ENCODE measurements at regions of chr10 and their contacts with region 1.

Region 1: GRCh38 chr10:45454859-45455258 is 80.8 kb downstream of the ALOX5 start:
- DNase-seq: no peak
- H3K4me3 ChIP-seq: no peak overlapping the region
- H3K27ac ChIP-seq: no peak overlapping the region
- H3K4me1 ChIP-seq: no peaks in the 10 kb centered on the region
- H3K27me3 ChIP-seq: no peaks in the 10 kb centered on the region
- CTCF ChIP-seq: no peak
- EP300 ChIP-seq: no peak
- POLR2A ChIP-seq: no peak

Region 2: GRCh38 chr10:45433716-45434469 is 21.0 kb before region 1 on chr10:
- intact Hi-C with region 1: no loop called
- DNase-seq: no peak
- H3K4me3 ChIP-seq: no peak overlapping the region
- H3K27ac ChIP-seq: no peak overlapping the region
- H3K4me1 ChIP-seq: no peaks in the 10 kb centered on the region
- H3K27me3 ChIP-seq: no peaks in the 10 kb centered on the region
- CTCF ChIP-seq: no peak
- EP300 ChIP-seq: no peak
- POLR2A ChIP-seq: no peak

Region 3: DNA sequence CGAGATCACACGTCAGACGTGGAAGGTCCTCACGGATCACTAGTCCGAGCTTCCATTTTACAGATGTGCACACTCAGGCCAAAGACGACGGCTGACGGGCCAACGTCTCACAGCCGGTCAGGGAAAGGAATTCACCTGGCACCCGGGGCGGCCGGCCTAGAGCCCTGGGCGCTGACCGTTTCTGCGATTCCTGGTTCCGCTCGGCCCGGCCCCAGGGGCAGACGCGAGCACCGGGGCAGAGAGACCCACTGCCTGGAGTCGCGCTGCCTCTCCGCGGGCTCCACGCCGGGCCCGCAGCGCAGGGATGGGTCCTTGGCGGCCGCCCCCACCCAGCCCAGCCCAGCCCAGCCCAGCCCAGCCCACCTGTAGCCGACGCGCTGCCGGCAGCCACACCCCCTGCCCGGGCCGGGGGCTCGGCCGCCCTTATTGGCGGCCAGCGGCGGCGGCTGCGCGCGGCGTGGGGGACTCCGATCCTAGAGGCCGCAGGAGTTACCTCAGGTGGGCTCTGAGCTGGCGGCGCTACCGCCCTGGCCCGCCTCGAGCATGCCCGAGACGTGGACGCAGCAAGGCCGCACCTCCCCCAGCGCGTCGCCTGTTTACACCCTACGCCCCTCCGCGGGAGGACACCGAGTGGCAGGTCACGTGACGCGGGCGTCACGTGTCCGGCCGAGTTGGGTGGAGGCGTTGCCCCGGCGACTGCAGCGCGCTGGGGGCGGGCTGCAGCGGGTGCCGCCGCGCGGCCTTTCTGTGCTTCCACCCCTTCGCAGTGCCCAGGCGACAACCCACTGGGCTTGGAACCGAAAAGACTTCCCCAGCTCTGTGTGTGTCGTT is 139.6 kb after region 1 on chr10:
- intact Hi-C with region 1: loop called in 1 of 4 experiments (anchors 5 kb)
- DNase-seq: peak; percentile 87 to 93 (median 91)
- H3K4me3 ChIP-seq: peak overlapping the region; percentile 94
- H3K27ac ChIP-seq: peak overlapping the region; percentile 50 to 57
- H3K4me1 ChIP-seq: peaks cover 2% of the 10 kb centered on the region
- H3K27me3 ChIP-seq: no peaks in the 10 kb centered on the region
- CTCF ChIP-seq: peak in 1 of 3 donors; percentile 27
- EP300 ChIP-seq: no peak
- POLR2A ChIP-seq: peak; percentile 39

Region 4: DNA sequence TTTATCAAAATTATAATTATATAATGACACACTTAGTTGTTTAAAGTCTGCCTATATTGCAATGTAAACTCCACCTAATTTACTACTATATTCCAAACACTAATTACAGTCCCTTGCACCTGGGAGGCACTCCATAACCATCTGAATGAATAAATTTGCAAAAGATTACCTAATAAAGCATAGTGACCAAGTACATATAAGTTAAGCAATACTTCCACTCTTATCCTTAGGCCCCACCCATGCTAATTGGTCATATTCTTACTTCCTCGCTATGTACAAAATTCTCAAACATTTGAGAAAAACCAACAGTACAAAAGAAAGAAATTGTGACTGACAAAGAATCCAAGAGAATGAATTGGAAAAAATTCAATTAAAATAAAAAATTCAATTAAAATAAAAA is 152.4 kb after region 1 on chr10:
- intact Hi-C with region 1: no loop called
- DNase-seq: no peak
- H3K4me3 ChIP-seq: no peak overlapping the region
- H3K27ac ChIP-seq: no peak overlapping the region
- H3K4me1 ChIP-seq: no peaks in the 10 kb centered on the region
- H3K27me3 ChIP-seq: no peaks in the 10 kb centered on the region
- CTCF ChIP-seq: no peak
- EP300 ChIP-seq: no peak
- POLR2A ChIP-seq: no peak

Measured in ovary (tissue), 10 donors.